ENCODE measurements at regions of chr20 and their contacts with region 1.

Region 1: DNA sequence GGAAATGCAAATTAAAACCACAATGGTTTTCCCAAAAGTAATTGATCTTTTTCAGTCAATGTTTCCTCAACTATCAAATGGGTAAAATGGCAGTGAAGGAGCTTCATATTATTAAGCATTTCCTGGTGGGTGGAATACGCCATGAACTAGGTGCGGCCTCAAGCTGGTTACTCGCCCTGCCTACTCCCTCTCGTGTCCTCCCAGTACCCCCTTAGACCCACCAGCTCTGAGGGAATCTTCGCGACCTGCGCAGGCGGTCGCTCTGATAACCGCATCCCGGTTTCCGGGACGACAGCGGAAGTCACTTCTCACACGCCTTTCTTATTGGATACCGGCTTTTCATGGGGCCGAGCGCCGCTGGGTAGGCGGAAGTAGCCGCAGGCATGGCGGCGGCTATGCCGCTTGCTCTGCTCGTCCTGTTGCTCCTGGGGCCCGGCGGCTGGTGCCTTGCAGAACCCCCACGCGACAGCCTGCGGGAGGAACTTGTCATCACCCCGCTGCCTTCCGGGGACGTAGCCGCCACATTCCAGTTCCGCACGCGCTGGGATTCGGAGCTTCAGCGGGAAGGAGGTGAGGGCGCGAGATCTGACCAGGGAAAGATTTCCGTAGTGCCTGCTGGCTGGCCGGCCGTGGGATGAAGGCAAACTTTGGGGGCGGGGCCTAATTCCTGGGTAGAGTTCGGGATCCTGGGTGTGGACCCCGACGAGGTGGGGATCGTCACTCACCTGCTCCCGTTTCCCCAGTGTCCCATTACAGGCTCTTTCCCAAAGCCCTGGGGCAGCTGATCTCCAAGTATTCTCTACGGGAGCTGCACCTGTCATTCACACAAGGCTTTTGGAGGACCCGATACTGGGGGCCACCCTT is at the start of gene PIGT:
- DNase-seq: peak; percentile 92 to 93
- ATAC-seq: peak; percentile 93
- H3K4me3 ChIP-seq: peak within 1 kb of the TSS; percentile 57 to 82
- H3K27ac ChIP-seq: peak within 1 kb of the TSS; percentile 44 to 71
- H3K4me1 ChIP-seq: no peaks in the 10 kb centered on the region
- H3K27me3 ChIP-seq: no peaks in the 10 kb centered on the region
- total RNA-seq, gene PIGT: 113 TPM

Region 2: DNA sequence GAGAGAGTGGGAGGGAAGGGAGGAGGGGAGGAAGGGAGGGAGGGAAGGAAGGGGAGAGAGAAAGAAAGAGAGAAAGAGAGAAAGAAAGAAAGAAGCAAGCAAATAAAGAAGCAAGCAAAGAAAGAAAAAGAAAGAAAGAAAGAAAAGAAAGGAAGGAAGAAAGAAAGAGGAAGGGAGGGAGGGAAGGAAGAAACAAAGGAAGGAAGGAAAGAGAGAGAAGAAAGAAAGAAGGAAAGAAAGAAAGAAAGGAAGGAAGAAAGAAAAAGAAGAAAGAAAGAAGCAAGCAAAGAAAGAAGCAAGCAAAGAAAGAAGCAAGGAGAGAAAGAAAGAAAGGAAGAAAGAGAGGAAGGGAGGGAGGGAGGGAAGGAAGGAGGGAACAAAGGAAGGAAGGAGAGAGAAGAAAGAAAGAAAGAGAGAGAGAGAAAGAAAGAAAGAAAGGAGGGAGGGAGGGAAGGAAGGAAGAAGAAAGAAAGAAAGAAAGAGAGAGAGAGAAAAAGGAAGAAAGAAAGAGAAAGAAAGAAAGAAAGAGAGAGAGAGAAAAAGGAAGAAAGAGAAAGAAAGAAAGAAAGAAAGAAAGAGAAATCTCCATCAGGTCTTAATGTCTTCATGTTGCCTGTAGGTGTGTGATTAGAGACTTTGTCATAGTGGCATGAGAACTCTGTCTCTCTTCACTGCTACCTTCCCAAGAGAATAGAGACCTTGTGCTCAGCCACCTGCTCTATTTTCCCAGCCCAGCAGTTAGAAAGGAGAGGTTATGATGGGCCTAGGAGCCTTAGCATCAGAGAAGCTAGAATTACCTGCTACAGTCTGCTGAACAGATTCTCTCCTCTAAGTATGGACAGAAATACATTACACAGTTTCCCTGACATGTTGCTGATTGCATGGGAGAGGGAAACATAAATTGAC is 204.2 kb before region 1 on chr20:
- intact Hi-C with region 1: no loop called
- DNase-seq: no peak
- ATAC-seq: no peak
- H3K4me3 ChIP-seq: no peak overlapping the region
- H3K27ac ChIP-seq: no peak overlapping the region
- H3K4me1 ChIP-seq: no peaks in the 10 kb centered on the region
- H3K27me3 ChIP-seq: no peaks in the 10 kb centered on the region

Region 3: DNA sequence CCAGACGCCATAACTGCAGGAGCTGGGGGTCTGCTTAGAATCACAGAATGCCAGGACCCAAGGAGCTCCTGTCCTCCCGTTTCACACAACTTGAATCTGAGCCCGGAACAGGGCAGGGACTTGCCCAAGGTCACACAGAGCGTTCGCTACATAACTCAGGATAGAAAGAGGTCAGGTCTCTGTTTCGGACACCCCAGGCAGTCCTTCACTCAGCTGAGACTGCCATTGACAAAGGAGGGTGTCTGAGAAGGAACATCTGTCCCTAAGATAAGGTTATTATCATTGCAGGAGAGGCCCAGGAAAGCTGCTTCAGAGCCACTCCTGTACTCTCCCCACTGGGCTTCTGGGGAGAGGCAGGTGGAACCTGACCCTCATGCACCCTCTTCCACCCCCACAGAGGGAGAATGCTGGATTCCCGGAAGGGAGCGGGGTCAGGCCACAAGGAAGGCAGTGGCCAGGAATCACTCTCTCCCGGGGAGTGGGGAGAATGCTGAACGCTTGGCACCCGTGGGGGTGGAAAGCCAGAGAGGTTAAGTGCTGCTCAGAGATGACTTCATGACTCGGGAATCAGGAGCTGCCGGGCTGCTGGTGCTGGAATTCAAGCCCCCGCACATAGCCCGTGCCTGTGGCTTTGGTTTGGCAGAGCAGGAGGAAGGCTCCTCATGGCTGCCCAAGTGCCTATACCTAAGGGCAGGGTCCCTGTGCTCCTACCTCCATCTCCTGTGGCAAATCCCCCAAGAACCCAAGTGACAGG is 78.5 kb before region 1 on chr20:
- intact Hi-C with region 1: loop called in 1 of 2 experiments (anchors 5 kb)
- DNase-seq: peak; percentile 85 to 90
- ATAC-seq: peak; percentile 67
- H3K4me3 ChIP-seq: no peak overlapping the region
- H3K27ac ChIP-seq: peak overlapping the region; percentile 87 to 92
- H3K4me1 ChIP-seq: peaks cover 0 to 4% of the 10 kb centered on the region in 2 donors
- H3K27me3 ChIP-seq: no peaks in the 10 kb centered on the region